HEK293 (cell line): ENCODE measurements at regions of chr1 and their contacts with region 1.

Region 1: DNA sequence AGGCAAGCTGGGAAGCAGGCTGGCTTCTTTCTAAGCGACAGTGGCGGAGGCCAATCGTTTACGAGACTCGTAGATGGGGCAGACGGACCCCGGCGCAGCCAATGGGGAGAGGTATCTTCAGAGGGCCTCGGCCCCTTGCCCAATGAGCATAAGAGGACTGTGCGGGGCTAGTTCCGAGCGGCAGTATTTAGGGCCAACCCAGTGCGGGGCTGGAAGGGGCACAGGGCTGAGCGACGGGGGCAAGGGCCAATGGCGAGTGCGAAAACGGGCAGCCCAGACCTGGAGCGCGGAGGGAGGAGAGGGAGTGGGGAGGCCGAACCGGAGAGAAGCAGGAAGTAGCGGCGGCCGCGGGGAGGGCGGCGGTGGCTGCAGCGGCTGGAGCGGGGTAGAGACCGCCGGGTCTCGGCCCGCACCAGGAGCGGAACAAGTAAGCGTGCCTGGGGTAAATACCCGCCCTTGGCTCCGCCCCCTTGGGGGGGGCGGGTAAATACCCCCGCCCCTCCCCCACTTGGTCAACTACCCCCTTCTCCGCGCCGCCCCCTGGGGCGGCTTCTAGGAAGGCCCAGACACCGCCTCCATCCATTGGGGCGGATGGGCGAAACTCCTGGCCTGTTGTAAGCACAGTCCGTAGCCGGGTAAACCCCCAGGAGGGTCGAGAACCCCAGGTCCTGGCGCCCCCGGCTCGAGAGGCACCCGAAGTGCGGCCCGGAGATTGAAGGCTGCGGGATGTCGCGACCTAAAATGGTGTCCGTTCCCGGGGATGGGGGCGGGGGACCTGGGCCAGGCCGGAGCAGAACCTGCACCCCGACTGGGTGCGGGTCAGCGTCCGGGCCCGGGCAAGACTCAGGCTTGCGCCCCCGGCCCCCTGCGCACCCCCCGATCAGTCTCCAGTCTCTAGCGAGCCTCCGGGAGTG is at the start of gene ZNF687:
- H3K4me3 ChIP-seq: peak within 1 kb of the TSS; percentile 77
- H3K27ac ChIP-seq: peak within 1 kb of the TSS; percentile 90
- H3K4me1 ChIP-seq: no peaks in the 10 kb centered on the region
- CTCF ChIP-seq: no peak

Region 2: GRCh38 chr1:150890033-150890416 is 392.2 kb before region 1 on chr1:
- CTCF ChIA-PET with region 1: no interaction called
- POLR2A ChIA-PET with region 1: no interaction called
- H3K4me3 ChIP-seq: no peak overlapping the region
- H3K27ac ChIP-seq: no peak overlapping the region
- H3K4me1 ChIP-seq: peaks cover 3% of the 10 kb centered on the region
- CTCF ChIP-seq: no peak

Region 3: GRCh38 chr1:151267760-151268159 is 14.5 kb before region 1 on chr1:
- CTCF ChIA-PET with region 1: interaction called, 4 read pairs
- POLR2A ChIA-PET with region 1: interaction called, 13 read pairs
- H3K4me3 ChIP-seq: no peak overlapping the region
- H3K27ac ChIP-seq: no peak overlapping the region
- H3K4me1 ChIP-seq: no peaks in the 10 kb centered on the region
- CTCF ChIP-seq: no peak

Region 4: GRCh38 chr1:151292207-151293030 is 10.2 kb after region 1 on chr1:
- CTCF ChIA-PET with region 1: interaction called, 3 read pairs
- POLR2A ChIA-PET with region 1: interaction called, 24 read pairs
- H3K4me3 ChIP-seq: no peak overlapping the region
- H3K27ac ChIP-seq: no peak overlapping the region
- H3K4me1 ChIP-seq: no peaks in the 10 kb centered on the region
- CTCF ChIP-seq: no peak